Esophagus muscularis mucosa (tissue), 4 donors: ENCODE measurements at regions of chr6 and their contacts with region 1.

Region 1: GRCh38 chr6:167898673-167899311 is 72.1 kb downstream of the AFDN start:
- DNase-seq: no peak
- H3K4me3 ChIP-seq: no peak overlapping the region
- H3K27ac ChIP-seq: no peak overlapping the region
- H3K4me1 ChIP-seq: peaks cover 0 to 3% (median 0%) of the 10 kb centered on the region in 4 donors
- H3K27me3 ChIP-seq: no peaks in the 10 kb centered on the region
- CTCF ChIP-seq: peak; percentile 76 to 90 (median 79)
- EP300 ChIP-seq: no peak
- POLR2A ChIP-seq: no peak

Region 2: GRCh38 chr6:167212713-167213005 is 686.1 kb before region 1 on chr6:
- intact Hi-C with region 1: loop called (anchors 10 kb)
- DNase-seq: no peak
- H3K4me3 ChIP-seq: no peak overlapping the region
- H3K27ac ChIP-seq: no peak overlapping the region
- H3K4me1 ChIP-seq: peaks cover 0 to 3% (median 0%) of the 10 kb centered on the region in 4 donors
- H3K27me3 ChIP-seq: no peaks in the 10 kb centered on the region
- CTCF ChIP-seq: no peak
- EP300 ChIP-seq: no peak
- POLR2A ChIP-seq: no peak

Region 3: DNA sequence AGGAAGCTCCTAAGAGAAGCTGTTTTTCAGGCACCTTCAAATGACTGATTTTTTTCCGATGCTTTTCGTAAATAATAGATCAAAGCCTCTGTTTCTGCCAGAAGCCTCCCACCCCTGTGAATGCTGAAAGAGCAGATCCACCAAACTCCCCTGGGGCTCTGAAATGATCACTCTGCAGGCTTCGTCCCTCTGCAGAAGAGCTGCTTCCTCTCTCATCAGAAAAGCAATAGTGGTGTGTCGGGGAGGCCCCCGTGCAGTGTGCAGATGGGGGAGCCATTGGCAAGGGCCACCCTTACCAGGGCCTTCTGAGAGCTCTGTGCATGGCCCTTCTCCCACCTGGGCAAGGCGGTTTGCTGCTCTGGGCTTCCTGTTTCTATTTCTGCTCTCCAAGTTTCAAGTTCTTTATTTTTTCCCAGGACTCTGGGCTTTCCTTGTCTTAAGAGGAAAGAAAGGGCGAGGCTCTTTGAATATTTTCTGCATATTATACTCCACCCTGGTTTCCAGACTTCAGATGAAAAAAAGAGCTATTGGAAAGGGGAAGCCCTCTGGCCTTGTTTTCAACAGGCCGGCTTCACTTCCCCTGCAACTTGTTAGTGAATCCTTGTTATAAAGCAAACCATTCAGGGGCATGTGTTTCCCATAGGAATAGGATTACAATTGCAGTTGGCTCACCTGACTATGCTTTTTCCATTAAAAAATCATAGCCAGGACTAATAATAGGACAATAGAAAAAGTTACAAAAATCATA is 418.7 kb before region 1 on chr6:
- intact Hi-C with region 1: loop called (anchors 5 kb)
- DNase-seq: no peak
- H3K4me3 ChIP-seq: no peak overlapping the region
- H3K27ac ChIP-seq: peak overlapping the region in 1 of 4 donors; percentile 20
- H3K4me1 ChIP-seq: peaks cover 5 to 10% (median 8%) of the 10 kb centered on the region in 4 donors
- H3K27me3 ChIP-seq: no peaks in the 10 kb centered on the region
- CTCF ChIP-seq: no peak
- EP300 ChIP-seq: no peak
- POLR2A ChIP-seq: no peak

Region 4: GRCh38 chr6:167501781-167502385 is 396.9 kb before region 1 on chr6:
- intact Hi-C with region 1: loop called (anchors 2 kb)
- DNase-seq: no peak
- H3K4me3 ChIP-seq: no peak overlapping the region
- H3K27ac ChIP-seq: no peak overlapping the region
- H3K4me1 ChIP-seq: peaks cover 0 to 6% (median 0%) of the 10 kb centered on the region in 4 donors
- H3K27me3 ChIP-seq: no peaks in the 10 kb centered on the region
- CTCF ChIP-seq: peak; percentile 21 to 50 (median 40)
- EP300 ChIP-seq: no peak
- POLR2A ChIP-seq: no peak

Region 5: GRCh38 chr6:167832497-167833395 is 66.0 kb before region 1 on chr6:
- intact Hi-C with region 1: loop called (anchors 5 kb)
- DNase-seq: no peak
- H3K4me3 ChIP-seq: no peak overlapping the region
- H3K27ac ChIP-seq: no peak overlapping the region
- H3K4me1 ChIP-seq: peaks cover 31 to 47% (median 39%) of the 10 kb centered on the region in 4 donors
- H3K27me3 ChIP-seq: no peaks in the 10 kb centered on the region
- CTCF ChIP-seq: no peak
- EP300 ChIP-seq: no peak
- POLR2A ChIP-seq: no peak